ENCODE measurements at regions of chr6 and their contacts with region 1.

Region 1: DNA sequence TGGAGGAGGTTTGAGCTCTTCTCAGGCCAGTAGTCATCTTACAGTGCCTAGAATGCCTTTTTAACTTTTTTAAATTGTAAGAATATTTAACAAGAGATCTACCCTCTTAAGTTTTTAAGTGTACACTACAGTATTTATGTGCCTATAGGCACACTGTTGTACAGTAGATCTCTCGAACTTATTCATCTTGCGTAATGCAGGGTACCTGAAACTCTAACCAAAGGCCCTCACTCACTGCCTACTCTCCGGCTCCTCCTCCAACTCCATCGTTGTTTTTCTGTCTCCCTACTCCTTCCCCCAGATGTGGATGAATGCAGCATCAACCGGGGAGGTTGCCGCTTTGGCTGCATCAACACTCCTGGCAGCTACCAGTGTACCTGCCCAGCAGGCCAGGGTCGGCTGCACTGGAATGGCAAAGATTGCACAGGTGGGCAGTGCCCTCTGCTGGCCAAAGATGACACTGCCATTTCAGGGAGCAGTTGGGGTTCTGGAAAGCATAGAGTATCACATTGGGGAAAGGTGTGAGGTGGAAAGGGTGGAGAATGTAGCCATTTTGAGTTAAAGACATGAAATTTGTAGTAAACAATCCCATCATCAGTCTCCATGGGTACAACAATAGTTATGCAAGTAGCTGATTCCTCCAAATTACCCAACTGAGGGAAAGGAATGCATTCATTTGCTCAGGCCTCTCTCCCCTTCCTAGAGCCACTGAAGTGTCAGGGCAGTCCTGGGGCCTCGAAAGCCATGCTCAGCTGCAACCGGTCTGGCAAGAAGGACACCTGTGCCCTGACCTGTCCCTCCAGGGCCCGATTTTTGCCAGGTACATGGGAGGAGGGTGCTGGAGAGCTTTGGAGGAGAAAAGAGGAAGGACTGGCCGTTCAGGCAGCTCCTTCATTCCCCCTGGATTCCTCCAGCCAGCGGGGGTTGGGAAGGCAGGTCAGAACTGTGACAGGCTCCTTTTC is 18.4 kb upstream of the ZNF76 start:
- DNase-seq: peak; percentile 31
- H3K4me3 ChIP-seq: no peak overlapping the region
- CTCF ChIP-seq: peak; percentile 98

Region 2: DNA sequence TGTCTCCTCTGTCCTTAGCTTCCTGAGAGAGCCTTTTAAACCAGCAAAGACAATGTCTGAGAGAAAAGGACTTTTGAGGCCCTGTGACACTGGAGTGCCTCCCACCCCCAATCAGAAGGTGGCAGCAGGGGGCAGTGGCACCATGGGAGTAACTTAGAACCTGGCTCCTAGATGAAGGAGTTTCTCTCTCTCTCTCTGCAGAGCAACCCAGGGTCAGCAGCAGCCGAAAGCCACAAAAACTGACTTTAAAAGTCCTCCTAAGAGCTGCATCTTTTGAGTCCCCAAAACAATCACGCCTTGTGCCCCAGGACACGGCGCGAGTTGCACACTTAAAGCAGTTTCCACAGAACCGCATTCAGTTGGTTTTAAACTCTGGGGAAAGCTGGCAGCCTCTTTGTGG is 94.7 kb before region 1 on chr6:
- in situ Hi-C with region 1: loop called (anchors 5 kb)
- DNase-seq: no peak
- H3K4me3 ChIP-seq: no peak overlapping the region
- CTCF ChIP-seq: peak; percentile 59

Measured in astrocyte of the cerebellum (primary cell).